Activated naive CD4-positive, alpha-beta T cell treated with anti-CD3 and anti-CD28 coated beads, Interleukin-2, amount 10 ng/mL, durations not matched to agents 7 days and 5 days (primary cell): ENCODE measurements at regions of chr12 and their contacts with region 1.

Region 1: GRCh38 chr12:7806863-7807487 is 17.8 kb downstream of the NANOG start:
- DNase-seq: peak; percentile 72
- H3K4me3 Mint-ChIP-seq: no peak overlapping the region
- H3K27ac Mint-ChIP-seq: no peak overlapping the region
- H3K4me1 Mint-ChIP-seq: no peaks in the 10 kb centered on the region
- H3K27me3 Mint-ChIP-seq: peaks cover 5% of the 10 kb centered on the region

Region 2: GRCh38 chr12:7571257-7571656 is 235.7 kb before region 1 on chr12:
- CTCF ChIA-PET with region 1: no interaction called
- DNase-seq: no peak
- H3K4me3 Mint-ChIP-seq: no peak overlapping the region
- H3K27ac Mint-ChIP-seq: no peak overlapping the region
- H3K4me1 Mint-ChIP-seq: no peaks in the 10 kb centered on the region
- H3K27me3 Mint-ChIP-seq: peaks cover 13% of the 10 kb centered on the region

Region 3: GRCh38 chr12:7638760-7639555 is 168.0 kb before region 1 on chr12:
- CTCF ChIA-PET with region 1: interaction called, 37 read pairs
- DNase-seq: peak; percentile 83
- H3K4me3 Mint-ChIP-seq: peak overlapping the region; percentile 49
- H3K27ac Mint-ChIP-seq: peak overlapping the region; percentile 76
- H3K4me1 Mint-ChIP-seq: peaks cover 33% of the 10 kb centered on the region
- H3K27me3 Mint-ChIP-seq: peaks cover 14% of the 10 kb centered on the region

Region 4: DNA sequence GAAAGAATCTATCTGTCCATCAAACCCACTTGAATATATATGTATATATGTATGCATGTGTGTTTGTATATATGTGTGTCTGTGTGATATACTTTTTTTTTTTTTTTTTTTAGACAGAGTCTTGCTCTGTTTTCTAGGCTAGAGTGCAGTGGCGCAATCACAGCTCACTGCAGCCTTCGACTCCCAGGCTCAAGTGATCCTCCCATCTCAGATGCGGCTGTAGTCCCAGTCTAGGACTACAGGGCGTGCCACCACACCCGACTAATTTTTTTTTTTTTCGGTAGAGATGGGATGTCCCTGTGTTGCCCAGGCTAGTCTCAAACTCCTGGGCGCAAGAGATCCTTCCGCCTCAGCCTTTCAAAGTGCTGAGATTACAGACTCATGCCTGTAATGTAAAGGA is 128.2 kb before region 1 on chr12:
- CTCF ChIA-PET with region 1: interaction called, 21 read pairs
- DNase-seq: no peak
- H3K4me3 Mint-ChIP-seq: no peak overlapping the region
- H3K27ac Mint-ChIP-seq: no peak overlapping the region
- H3K4me1 Mint-ChIP-seq: peaks cover 4% of the 10 kb centered on the region
- H3K27me3 Mint-ChIP-seq: peaks cover 11% of the 10 kb centered on the region